Aorta (tissue), 5 donors: ENCODE measurements at regions of chr12 and their contacts with region 1.

Region 1: DNA sequence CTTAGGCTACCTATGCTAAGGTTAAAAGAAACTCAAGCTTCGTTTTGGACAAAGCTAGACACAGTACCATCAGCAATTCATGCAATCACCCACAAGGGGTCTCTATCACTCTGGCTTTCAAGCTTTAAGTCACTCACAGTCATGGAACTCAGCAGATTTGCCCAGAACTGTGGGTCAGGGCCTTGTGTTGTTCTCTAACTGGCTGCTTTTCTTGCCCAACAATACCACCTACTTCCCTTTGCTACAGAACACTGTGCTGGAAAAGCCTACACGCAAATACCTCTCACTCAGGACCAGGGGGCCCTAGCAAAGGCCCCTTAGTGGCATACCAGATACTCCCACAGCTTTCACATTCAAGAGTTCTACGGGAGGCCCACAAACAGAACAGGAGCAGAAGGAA is 9.1 kb downstream of the NEMP1 start:
- DNase-seq: peak in 1 of 2 donors; percentile 76
- ATAC-seq: peak; percentile 96
- H3K4me3 ChIP-seq: no peak overlapping the region
- H3K27ac ChIP-seq: peak overlapping the region; percentile 80 to 88
- H3K4me1 ChIP-seq: peaks cover 0 to 5% of the 10 kb centered on the region in 2 donors
- H3K27me3 ChIP-seq: no peaks in the 10 kb centered on the region

Region 2: GRCh38 chr12:56751712-56752598 is 317.6 kb before region 1 on chr12 and contains the start of gene PRIM1:
- intact Hi-C with region 1: loop called in 1 of 2 experiments (anchors 10 kb)
- DNase-seq: peak; percentile 90 to 94
- ATAC-seq: peak; percentile 96
- H3K4me3 ChIP-seq: peak within 1 kb of the TSS; percentile 2 to 76
- H3K27ac ChIP-seq: no peak within 1 kb of the TSS
- H3K4me1 ChIP-seq: no peaks in the 10 kb centered on the region
- H3K27me3 ChIP-seq: no peaks in the 10 kb centered on the region
- total RNA-seq, gene PRIM1: 3.2 to 4.6 TPM

Region 3: GRCh38 chr12:56979628-56980027 is 89.9 kb before region 1 on chr12:
- intact Hi-C with region 1: no loop called
- DNase-seq: no peak
- ATAC-seq: no peak
- H3K4me3 ChIP-seq: no peak overlapping the region
- H3K27ac ChIP-seq: no peak overlapping the region
- H3K4me1 ChIP-seq: no peaks in the 10 kb centered on the region
- H3K27me3 ChIP-seq: no peaks in the 10 kb centered on the region

Region 4: DNA sequence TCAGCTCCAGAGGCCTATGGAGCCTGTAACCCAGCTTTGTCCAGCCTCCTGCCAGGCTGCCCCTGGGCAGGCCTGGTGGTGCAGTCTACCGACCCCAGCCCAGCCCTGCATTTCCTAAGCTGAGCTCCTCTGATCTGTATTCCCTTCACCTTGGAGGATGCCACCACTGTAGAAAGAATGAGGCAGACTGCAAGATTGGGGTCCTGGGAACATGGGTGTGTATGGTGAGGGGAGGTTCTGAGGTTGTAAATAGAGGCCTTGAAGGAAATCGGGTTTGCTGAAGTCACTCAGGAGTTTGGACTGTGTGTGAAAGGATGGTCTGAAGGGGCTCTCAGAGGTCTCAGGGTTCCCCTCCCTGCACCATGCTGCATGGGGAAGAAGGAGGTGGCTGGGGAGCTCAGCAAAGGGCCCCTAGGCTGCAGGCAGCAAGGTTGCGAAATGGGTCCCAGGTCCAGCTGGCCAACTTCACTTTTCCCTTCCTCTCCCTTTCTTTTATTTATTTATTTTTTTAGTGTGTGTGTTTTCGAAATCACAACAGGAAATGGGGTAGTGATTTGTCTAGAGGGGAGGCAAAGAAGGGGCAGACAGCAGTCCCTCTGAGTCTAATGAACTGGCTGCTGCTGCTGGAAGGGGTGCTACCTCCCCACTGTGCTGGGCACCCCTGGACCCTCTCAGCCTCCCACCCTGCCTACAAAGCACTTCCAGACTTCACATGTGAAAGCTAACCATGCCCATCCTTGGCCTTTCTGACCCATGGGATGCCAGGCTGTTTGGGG is 79.1 kb after region 1 on chr12:
- intact Hi-C with region 1: no loop called
- DNase-seq: peak in 1 of 2 donors; percentile 88
- ATAC-seq: peak; percentile 68
- H3K4me3 ChIP-seq: no peak overlapping the region
- H3K27ac ChIP-seq: peak overlapping the region; percentile 43 to 68
- H3K4me1 ChIP-seq: peaks cover 0 to 8% of the 10 kb centered on the region in 2 donors
- H3K27me3 ChIP-seq: no peaks in the 10 kb centered on the region

Region 5: DNA sequence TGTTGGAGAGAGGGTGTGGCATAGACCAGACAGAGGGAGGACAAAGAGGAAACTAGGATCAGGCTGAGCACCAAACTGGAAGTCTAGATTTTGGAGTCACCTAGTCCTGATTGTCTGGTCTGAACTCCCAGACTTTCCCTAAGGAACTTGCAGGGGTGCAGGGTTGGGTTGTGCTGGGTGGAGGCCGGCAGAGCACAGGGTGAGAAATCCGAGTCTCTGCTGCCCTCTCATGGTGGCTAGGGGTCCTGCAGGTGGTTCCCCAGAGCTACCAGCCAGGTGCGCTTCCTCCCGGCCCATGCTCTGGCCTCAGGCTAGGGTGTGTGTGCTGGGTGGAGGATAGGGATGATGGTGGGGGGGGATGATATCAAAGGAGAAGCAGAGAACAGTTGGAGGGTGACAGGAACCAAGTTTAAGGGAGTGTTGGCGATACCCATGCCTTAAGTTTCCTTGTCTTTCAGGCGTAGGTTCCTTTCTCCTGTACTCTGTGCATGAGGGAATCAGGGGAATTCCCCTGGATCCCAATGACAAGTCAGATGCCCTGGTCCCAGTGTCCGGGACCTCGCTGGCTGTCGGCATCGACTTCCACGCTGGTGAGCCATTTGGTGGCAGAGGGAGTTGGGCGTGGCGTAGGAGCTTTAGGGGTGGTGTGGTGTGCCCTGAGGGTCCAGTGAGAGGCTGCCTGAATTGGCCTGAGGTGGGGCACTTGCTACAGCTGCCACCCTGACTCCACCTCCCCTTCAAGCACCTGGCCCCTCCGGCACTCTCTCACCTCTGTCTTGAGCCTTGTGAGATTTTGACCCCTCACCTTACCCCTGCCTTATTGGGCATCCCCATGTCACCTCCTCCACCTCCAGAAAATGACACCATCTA is 113.6 kb after region 1 on chr12:
- intact Hi-C with region 1: loop called (anchors 5 kb)
- DNase-seq: peak; percentile 77 to 90
- ATAC-seq: peak; percentile 83
- H3K4me3 ChIP-seq: no peak overlapping the region
- H3K27ac ChIP-seq: no peak overlapping the region
- H3K4me1 ChIP-seq: no peaks in the 10 kb centered on the region
- H3K27me3 ChIP-seq: no peaks in the 10 kb centered on the region

Region 6: DNA sequence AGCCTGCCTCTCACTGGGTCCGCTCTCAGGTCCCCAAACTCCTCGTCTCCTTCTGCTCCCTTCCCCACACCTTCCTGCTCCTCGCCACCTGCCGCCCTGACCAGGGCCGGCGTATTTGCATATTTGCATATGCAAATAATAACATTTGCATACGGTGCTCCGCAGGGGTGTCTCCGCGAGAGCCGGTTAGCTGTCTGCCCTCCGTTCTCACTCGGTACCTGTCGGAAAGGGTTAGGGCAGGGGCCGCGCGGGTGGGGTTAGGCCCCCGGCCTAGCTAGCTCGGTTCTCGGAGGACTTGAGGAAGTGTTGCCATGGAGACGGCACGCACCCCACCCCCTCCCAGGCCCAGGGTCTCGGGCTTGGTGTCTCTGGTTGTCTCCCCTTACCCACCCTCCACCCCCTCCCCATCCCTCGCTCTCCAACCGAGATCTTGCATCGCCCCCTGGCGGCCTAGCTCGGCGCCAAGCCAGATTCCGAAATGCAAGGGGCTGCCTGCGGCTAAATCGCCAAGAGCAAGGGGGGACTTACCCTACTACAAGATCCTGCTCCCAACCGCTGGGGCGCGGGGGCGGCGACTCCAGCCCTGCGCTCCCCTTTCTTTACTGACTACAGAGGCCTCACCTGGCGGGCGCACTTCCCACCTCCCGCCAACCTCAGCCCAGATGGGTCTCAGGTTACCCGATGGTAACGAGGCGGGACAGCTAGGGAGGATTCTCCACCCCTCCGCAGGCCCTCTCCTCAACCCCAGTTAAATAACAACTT is 173.4 kb after region 1 on chr12:
- intact Hi-C with region 1: no loop called
- DNase-seq: peak in 1 of 2 donors; percentile 87
- ATAC-seq: no peak
- H3K4me3 ChIP-seq: no peak overlapping the region
- H3K27ac ChIP-seq: no peak overlapping the region
- H3K4me1 ChIP-seq: no peaks in the 10 kb centered on the region
- H3K27me3 ChIP-seq: no peaks in the 10 kb centered on the region